Gastrocnemius medialis (tissue), 4 donors: ENCODE measurements at regions of chr3 and their contacts with region 1.

Region 1: DNA sequence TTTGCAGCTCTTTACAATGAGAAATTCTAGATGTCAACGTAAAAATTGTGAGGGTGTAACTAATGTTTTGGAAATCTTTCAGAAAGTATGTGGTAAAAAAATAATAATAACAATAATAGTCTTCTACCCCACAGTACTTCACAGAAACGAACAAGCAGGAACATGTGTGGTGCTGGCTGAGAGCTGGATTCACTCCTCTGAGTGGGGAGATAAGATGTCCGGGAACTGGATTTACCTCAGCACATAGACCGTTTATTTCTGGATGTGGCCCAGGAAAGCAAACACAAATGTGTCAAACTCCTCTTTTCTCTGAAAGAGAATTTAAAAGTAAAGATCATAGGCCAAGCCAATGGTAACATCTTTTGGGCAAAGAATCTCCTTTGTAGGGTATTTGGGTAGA is 103.4 kb downstream of the SLC49A4 start:
- DNase-seq: no peak
- ATAC-seq: no peak
- H3K4me3 ChIP-seq: no peak overlapping the region
- H3K27ac ChIP-seq: no peak overlapping the region
- H3K4me1 ChIP-seq: peaks cover 11 to 12% of the 10 kb centered on the region in 2 donors
- H3K27me3 ChIP-seq: no peaks in the 10 kb centered on the region
- CTCF ChIP-seq: no peak
- POLR2A ChIP-seq: no peak

Region 2: DNA sequence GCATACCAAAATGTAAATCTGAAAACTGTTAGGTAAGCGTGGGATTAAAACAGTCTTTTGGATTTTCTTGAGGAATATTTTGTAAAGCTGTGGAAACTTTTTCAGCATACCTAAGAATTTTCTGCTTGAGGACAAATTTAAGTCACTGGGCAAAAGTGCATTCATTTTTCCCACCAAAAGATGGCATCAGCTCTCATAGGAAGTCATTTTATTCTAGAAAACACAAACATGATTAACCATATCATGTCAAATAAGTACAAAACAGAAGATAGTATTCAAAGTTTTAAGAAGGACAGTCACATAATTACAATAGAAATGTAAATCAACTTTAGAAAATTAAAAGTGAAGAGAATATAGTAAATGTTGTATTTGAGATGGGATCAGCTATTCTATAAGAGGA is 39.9 kb before region 1 on chr3:
- in situ Hi-C with region 1: no loop called
- intact Hi-C with region 1: loop called (anchors 5 kb)
- DNase-seq: no peak
- ATAC-seq: no peak
- H3K4me3 ChIP-seq: no peak overlapping the region
- H3K27ac ChIP-seq: no peak overlapping the region
- H3K4me1 ChIP-seq: no peaks in the 10 kb centered on the region
- H3K27me3 ChIP-seq: no peaks in the 10 kb centered on the region
- CTCF ChIP-seq: no peak
- POLR2A ChIP-seq: no peak

Region 3: DNA sequence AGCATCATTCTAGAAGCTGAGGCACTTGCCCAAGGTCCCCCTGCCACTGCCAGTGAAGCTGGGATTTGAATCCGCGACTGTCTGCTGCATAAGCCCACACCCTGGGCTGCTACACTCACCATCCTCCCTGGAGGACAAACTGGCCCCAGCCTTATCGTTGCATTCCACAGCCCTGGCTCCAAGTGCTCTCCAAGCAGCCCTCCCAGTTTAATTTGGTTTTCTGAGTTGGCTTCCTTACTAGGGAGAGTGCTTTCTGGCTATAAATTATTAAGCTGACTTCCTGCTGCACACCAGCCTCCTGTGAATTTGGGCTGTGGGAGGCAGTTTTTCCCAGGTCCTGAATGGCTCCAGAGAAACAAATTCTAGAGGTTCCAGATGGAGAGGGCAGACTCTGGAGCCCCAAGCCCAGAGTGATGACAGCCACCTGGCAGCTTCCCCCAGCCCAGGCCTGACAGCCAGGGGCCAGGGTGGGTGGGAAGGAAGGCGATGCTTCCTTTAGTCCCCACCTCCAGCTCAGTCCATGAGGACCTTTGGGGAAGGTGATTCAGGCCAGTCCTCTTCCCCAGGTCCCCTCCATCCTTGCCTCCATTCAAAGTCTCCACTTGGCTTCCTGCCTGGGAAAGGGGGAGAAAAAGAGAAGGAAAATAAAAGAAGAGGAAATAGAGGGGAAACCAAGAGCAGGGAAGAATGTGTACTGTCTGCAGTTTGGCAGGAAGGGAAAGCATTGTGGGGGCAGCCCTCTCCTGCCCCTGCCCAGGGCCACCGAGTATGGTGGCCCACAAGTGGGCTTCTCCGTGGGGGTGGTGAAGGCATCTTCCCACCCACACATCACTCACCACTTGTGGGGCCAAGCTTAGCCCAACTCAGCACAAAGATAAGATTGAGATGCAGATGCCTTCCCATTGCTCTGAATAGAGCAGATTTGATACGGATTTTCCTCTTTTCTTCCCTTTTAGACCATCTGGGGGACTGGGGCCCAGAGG is 59.7 kb after region 1 on chr3:
- in situ Hi-C with region 1: no loop called
- intact Hi-C with region 1: no loop called
- DNase-seq: no peak
- ATAC-seq: no peak
- H3K4me3 ChIP-seq: no peak overlapping the region
- H3K27ac ChIP-seq: peak overlapping the region in 1 of 4 donors; percentile 18
- H3K4me1 ChIP-seq: no peaks in the 10 kb centered on the region
- H3K27me3 ChIP-seq: peaks cover 0 to 3% (median 0%) of the 10 kb centered on the region in 3 donors
- CTCF ChIP-seq: no peak
- POLR2A ChIP-seq: no peak

Region 4: DNA sequence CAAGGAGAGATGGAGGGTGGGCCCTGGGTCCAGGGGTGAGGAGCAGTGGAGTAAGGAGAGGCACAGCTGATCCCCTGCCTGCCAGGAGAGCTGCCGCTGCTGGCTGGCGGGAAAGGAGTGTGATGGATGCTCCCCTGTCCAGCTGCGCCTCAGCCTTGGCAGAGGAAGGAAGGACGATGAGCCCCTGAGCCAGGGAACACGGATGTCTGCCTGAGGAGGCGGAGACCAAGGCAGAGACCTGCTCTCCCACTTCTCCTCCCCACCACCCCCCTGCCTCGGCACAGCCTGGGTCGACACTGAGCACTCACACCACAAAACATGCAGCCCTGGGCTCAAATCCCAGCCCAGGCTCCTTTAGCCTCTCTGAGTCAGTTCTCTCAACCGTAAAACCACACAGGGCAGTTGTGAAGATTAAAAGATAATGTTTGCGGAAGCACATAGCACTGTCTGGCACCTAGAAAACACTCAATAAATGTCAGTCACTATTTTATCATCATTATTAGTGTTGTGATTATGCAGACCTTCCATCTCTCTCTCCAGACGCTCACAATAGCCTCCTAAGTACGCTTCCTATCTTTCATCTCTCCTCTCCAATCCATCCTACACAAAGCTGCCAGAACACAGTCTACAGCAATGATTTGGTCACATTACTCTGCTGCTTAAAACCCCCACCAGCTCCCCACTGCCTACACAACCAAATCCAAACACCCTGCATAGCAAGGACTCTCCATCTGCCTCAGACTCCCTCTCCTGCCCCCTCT is 77.0 kb after region 1 on chr3:
- in situ Hi-C with region 1: no loop called
- intact Hi-C with region 1: no loop called
- DNase-seq: no peak
- ATAC-seq: no peak
- H3K4me3 ChIP-seq: no peak overlapping the region
- H3K27ac ChIP-seq: no peak overlapping the region
- H3K4me1 ChIP-seq: no peaks in the 10 kb centered on the region
- H3K27me3 ChIP-seq: no peaks in the 10 kb centered on the region
- CTCF ChIP-seq: no peak
- POLR2A ChIP-seq: no peak